Right ventricle myocardium inferior (tissue), 1 donor: ENCODE measurements at regions of chr14 and their contacts with region 1.

Region 1: DNA sequence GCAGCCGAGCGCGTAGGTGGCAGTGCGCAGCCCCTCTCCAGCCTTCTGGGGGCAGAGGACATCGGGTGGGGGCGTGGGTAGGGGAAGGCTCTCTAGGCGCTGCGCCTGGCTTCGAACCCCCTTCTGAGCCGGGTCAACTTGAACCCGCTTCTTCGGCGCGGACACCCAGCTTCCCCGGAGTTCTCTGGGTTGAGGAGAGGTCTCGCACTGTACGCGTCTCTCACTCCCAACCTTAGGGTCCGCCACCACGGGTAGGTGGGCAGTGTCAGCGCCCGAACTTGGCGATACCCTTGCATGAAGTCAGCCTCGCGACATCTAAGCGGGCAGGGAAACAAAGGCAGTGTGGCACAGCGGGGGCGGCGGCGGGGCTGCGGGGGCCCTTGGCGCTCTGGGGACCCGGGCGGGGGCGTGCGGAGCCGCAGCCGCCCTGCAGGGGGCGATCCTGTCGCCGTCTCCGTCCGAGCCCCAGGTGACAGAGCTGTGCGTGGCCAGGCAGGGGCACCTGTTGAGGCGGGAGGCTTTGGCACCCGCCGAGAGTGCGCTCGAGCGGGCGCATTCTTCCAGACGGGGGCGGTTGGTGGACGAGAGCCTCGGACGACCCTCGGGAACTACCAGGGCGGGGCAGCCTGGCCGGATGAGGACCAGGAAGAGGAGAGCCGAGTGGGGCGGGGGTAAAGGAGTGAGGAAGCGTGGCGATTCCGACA is 1.1 kb downstream of the GALNT16 start:
- DNase-seq: no peak
- ATAC-seq: peak; percentile 64

Region 2: GRCh38 chr14:69288011-69288771 is 27.2 kb after region 1 on chr14:
- intact Hi-C with region 1: loop called (anchors 1 kb)
- DNase-seq: no peak
- ATAC-seq: peak; percentile 63

Region 3: GRCh38 chr14:69317104-69317755 is 56.2 kb after region 1 on chr14:
- intact Hi-C with region 1: loop called (anchors 1 kb)
- DNase-seq: no peak
- ATAC-seq: peak; percentile 93

Region 4: DNA sequence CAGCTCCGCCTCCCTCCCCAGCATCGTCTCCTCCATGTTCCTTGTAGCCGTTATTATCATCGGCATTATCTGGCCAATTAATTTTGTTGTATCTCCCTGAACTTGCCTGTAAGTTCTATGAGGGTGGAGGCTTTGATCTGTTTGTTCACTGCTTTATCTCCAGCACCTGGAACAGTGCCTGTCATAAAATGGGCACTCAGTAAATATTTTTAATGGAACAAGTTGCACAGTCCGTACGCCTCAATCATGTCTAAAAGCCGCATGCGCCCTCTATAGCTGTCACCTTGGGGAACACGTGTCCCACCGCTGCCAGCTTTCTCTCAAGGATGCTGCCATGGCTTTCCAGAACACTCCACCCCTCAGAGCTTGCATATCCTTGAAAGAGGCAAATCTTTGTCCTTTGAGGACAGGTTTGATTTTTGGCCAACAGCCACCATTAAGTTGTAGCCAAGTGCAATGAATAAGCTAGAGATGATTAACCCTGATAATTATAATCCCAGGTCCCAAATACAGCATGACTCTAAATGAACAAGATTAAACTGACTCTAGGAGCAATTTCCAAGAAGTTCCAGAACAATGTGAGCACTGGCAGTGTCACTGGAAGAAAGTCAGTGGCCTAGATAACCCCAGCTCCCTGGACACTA is 82.0 kb after region 1 on chr14:
- intact Hi-C with region 1: loop called (anchors 5 kb)
- DNase-seq: no peak
- ATAC-seq: peak; percentile 74